ENCODE measurements at regions of chr7 and their contacts with region 1.

Region 1: DNA sequence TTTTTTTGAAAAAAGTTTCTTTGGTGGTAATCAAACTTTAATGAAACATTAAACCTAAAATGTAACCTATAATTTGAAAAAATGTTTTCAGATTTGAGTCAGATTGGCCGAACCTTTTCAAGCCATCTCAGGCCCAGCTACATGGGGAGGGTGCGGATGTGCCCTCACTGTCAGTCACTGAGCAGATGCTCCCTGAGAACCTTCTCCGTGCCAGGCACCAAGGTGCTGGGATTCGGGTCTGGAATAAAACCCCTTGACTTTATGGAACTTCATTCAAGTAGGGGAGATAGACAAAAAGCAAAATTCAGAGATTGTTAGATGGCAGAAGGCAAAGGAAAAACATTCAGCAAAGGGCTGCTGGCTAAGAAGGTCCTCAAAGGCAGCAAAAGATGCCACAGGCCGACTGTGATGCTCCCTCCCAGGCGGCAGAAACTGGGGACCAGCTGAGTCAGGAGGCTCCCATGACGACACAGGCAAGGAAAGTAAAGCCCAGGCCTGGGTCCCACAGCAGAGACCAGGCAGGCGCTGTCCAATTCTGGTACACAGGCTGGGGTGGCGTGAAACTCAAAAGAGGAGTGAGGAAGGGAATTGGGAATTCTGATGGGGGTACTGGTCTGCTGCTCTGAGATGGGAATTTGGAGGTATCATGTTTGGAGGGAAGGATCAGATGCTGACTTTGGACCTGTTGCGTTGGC is 82.2 kb upstream of the DDC start:
- DNase-seq: no peak
- ATAC-seq: no peak
- H3K4me3 ChIP-seq: no peak overlapping the region
- H3K27ac ChIP-seq: no peak overlapping the region
- H3K4me1 ChIP-seq: no peaks in the 10 kb centered on the region
- H3K27me3 ChIP-seq: no peaks in the 10 kb centered on the region
- CTCF ChIP-seq: no peak

Region 2: DNA sequence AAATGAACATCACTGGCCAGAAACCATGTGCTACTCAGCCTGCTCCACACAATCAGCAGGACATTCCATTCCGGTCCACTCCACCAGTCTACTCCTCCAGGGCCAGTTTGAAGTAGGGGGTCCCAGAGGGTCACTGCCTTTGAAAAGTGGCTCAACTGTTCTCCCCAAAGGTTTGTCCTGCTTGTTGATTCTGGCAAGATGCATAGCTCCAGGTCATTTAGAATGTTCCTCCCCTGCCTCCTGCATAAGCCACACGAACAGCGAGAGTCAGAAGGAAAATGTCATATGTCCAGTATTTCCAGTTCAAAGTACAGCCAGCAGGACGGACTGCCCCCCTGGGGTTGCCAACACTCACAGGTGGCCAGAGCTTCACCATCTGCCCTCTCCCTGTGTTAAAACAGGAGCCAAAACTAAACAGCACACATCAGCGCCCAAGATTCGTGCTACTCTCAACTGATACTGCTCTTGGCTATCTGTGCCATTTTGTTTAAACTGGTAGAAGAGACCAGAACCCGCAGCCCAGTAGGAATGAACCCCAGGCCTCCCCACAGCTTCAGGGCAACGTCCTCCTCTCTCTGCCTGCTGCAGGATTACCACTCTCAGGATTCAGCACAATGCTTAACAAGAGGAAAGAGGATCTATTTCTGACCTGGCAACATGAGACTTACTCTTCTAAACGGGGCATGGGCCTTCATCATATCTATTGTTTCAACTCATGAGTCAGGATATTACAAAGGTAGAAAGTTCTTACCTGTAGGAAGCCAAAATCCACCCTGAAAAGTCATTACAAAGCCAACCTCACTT is 124.0 kb after region 1 on chr7:
- CTCF ChIA-PET with region 1: interaction called, 11 read pairs
- POLR2A ChIA-PET with region 1: no interaction called
- in situ Hi-C with region 1: no loop called
- intact Hi-C with region 1: no loop called
- DNase-seq: no peak
- ATAC-seq: no peak
- H3K4me3 ChIP-seq: no peak overlapping the region
- H3K27ac ChIP-seq: no peak overlapping the region
- H3K4me1 ChIP-seq: no peaks in the 10 kb centered on the region
- H3K27me3 ChIP-seq: no peaks in the 10 kb centered on the region
- CTCF ChIP-seq: no peak